ENCODE measurements at regions of chr16 and their contacts with region 1.

Region 1: DNA sequence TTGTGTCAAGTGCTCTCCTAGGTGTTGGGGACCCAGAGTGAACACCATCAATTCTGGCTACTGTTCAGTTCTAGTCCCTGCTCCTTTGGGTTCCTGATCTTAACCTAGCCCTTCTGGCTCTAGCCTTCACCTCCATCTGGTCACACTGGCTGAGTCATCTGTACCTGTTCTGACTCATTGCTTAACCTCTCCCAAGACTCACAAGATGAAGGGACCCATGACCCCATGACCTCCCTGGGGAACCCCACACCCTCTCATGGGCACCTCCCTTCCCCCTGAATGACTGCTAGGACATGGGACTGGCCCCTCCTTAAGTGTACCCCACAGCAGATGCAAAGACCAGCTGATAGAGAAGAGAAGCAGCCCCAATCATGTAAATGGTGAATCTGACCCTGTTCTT is 345.8 kb upstream of the CDH5 start:
- DNase-seq: peak; percentile 63
- H3K4me3 ChIP-seq: no peak overlapping the region
- H3K27ac ChIP-seq: no peak overlapping the region
- H3K4me1 ChIP-seq: peaks cover 9% of the 10 kb centered on the region
- H3K27me3 ChIP-seq: no peaks in the 10 kb centered on the region
- CTCF ChIP-seq: no peak

Region 2: GRCh38 chr16:66070140-66070917 is 49.7 kb after region 1 on chr16:
- CTCF ChIA-PET with region 1: no interaction called
- dilution Hi-C with region 1: no loop called
- in situ Hi-C with region 1: no loop called
- intact Hi-C with region 1: no loop called
- DNase-seq: no peak
- H3K4me3 ChIP-seq: no peak overlapping the region
- H3K27ac ChIP-seq: no peak overlapping the region
- H3K4me1 ChIP-seq: no peaks in the 10 kb centered on the region
- H3K27me3 ChIP-seq: no peaks in the 10 kb centered on the region
- CTCF ChIP-seq: no peak

Region 3: DNA sequence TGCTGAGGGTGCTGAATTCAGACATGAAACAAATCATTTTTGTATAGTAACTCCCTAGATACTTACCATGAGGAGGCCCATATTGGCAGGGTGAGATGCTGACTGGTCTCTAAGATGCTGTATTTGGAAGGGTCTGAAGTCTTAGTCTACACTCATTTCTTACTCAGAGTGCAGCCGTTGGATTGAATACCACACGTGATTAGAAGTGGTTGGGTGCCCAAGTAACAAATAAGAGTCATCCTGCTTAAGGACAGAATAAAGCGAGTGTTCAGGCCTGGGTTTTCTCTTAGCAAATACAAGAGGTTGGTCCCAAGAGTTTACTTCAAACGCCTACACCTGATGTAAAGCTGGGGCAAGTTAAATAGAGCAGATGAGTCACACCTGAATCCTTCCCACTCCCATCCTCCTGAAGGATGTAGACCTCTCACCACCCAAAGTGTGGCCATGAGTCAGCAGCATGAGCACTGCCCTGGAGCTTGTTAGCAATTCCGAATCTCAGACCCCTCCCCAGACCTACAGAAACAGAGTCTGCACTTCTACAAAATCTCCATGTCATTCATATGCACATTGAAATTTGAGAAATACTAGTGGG is 61.2 kb after region 1 on chr16:
- CTCF ChIA-PET with region 1: no interaction called
- dilution Hi-C with region 1: no loop called
- in situ Hi-C with region 1: no loop called
- intact Hi-C with region 1: loop called (anchors 2 kb)
- DNase-seq: peak; percentile 91
- H3K4me3 ChIP-seq: no peak overlapping the region
- H3K27ac ChIP-seq: peak overlapping the region; percentile 53
- H3K4me1 ChIP-seq: peaks cover 13% of the 10 kb centered on the region
- H3K27me3 ChIP-seq: no peaks in the 10 kb centered on the region
- CTCF ChIP-seq: no peak

Measured in mammary epithelial cell (primary cell).